ENCODE measurements at regions of chr20 and their contacts with region 1.

Region 1: GRCh38 chr20:19995220-19995863 is 21.8 kb upstream of the NAA20 start:
- DNase-seq: no peak
- H3K4me3 ChIP-seq: no peak overlapping the region
- H3K27ac ChIP-seq: peak overlapping the region; percentile 100
- H3K4me1 ChIP-seq: peaks cover 52% of the 10 kb centered on the region
- H3K27me3 ChIP-seq: no peaks in the 10 kb centered on the region
- CTCF ChIP-seq: peak; percentile 70 to 80

Region 2: DNA sequence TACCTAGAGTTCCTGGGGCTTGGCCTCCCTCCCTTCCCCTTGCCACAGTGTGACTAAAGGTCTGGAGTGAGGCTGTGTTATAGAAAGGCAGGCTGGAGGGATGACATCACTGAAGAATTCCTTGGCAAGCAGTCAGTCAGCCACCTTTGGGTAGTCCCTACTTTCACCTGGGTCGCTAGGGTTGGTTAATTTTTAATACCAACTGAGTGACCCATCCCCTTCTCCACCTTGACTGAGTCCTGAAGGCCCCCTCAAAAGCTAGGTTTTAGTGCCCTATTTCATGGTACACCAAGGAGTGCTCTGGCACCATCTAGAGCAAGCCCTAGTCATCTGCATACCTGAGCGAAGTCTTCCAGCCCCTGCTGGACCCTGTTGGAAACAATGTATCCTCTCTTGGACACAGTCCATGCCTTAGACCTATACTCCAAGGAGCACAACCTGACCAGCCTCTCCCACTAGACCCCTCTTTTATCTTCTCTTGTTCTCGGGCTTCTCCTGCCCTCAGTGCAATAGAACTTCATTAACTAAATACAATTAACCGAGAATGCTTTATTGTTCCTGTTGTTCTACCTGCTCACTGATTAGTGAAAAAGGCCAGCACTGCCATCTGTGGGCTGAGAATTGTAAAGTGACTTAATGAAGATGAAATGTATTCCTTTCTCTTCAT is 192.7 kb before region 1 on chr20:
- CTCF ChIA-PET with region 1: no interaction called
- dilution Hi-C with region 1: no loop called
- in situ Hi-C with region 1: no loop called
- intact Hi-C with region 1: loop called (anchors 5 kb)
- DNase-seq: peak; percentile 89
- H3K4me3 ChIP-seq: no peak overlapping the region
- H3K27ac ChIP-seq: peak overlapping the region; percentile 43
- H3K4me1 ChIP-seq: peaks cover 26% of the 10 kb centered on the region
- H3K27me3 ChIP-seq: no peaks in the 10 kb centered on the region
- CTCF ChIP-seq: peak; percentile 39 to 43

Region 3: GRCh38 chr20:19815553-19815991 is 179.8 kb before region 1 on chr20:
- CTCF ChIA-PET with region 1: no interaction called
- dilution Hi-C with region 1: no loop called
- in situ Hi-C with region 1: no loop called
- intact Hi-C with region 1: loop called (anchors 1 kb)
- DNase-seq: peak; percentile 97
- H3K4me3 ChIP-seq: no peak overlapping the region
- H3K27ac ChIP-seq: peak overlapping the region; percentile 92
- H3K4me1 ChIP-seq: peaks cover 46% of the 10 kb centered on the region
- H3K27me3 ChIP-seq: no peaks in the 10 kb centered on the region
- CTCF ChIP-seq: peak in 1 of 2 donors; percentile 43

Region 4: GRCh38 chr20:19913927-19914614 is 81.3 kb before region 1 on chr20:
- CTCF ChIA-PET with region 1: interaction called, 27 read pairs
- dilution Hi-C with region 1: no loop called
- in situ Hi-C with region 1: no loop called
- intact Hi-C with region 1: loop called (anchors 1 kb)
- DNase-seq: peak; percentile 97
- H3K4me3 ChIP-seq: no peak overlapping the region
- H3K27ac ChIP-seq: peak overlapping the region; percentile 94
- H3K4me1 ChIP-seq: peaks cover 35% of the 10 kb centered on the region
- H3K27me3 ChIP-seq: no peaks in the 10 kb centered on the region
- CTCF ChIP-seq: no peak

Region 5: GRCh38 chr20:19924255-19924654 is 71.1 kb before region 1 on chr20:
- CTCF ChIA-PET with region 1: no interaction called
- dilution Hi-C with region 1: no loop called
- in situ Hi-C with region 1: no loop called
- intact Hi-C with region 1: no loop called
- DNase-seq: no peak
- H3K4me3 ChIP-seq: no peak overlapping the region
- H3K27ac ChIP-seq: no peak overlapping the region
- H3K4me1 ChIP-seq: peaks cover 17% of the 10 kb centered on the region
- H3K27me3 ChIP-seq: no peaks in the 10 kb centered on the region
- CTCF ChIP-seq: no peak

Region 6: DNA sequence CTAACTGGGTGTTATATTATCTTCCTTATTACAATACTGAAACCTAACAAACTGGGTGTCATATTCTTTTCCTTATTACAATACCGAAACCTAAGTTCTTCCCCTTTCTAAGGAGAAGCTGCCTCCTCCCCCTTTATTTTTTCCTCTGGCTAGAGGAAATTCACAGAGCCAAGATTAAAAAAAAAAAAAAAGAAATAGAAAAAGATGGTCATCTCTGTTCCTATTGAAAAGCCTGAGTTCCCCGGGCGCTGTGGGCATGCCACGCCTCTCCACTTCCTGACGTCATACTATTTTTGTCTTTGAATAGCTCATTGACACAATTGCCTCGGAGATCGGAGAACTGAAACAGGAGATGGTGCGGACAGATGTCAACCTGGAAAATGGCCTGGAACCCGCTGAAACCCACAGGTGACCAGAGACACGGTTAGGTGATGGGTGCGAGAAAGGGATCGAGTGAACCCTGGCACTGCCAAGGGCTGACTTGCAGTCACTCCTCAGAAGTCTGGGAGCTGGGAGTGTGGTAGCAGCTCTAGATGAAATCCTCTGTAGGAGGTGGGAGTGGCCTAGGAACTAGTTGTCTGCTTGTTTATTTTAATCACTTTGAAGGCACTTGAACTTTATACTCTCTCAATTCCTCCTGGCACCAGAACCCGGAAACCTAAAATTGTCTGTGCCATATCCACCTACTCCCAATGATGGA is 60.4 kb before region 1 on chr20:
- CTCF ChIA-PET with region 1: no interaction called
- dilution Hi-C with region 1: no loop called
- in situ Hi-C with region 1: no loop called
- intact Hi-C with region 1: loop called (anchors 1 kb)
- DNase-seq: peak; percentile 88
- H3K4me3 ChIP-seq: peak overlapping the region; percentile 31 to 52 (median 49)
- H3K27ac ChIP-seq: peak overlapping the region; percentile 85
- H3K4me1 ChIP-seq: peaks cover 42% of the 10 kb centered on the region
- H3K27me3 ChIP-seq: no peaks in the 10 kb centered on the region
- CTCF ChIP-seq: no peak

Region 7: DNA sequence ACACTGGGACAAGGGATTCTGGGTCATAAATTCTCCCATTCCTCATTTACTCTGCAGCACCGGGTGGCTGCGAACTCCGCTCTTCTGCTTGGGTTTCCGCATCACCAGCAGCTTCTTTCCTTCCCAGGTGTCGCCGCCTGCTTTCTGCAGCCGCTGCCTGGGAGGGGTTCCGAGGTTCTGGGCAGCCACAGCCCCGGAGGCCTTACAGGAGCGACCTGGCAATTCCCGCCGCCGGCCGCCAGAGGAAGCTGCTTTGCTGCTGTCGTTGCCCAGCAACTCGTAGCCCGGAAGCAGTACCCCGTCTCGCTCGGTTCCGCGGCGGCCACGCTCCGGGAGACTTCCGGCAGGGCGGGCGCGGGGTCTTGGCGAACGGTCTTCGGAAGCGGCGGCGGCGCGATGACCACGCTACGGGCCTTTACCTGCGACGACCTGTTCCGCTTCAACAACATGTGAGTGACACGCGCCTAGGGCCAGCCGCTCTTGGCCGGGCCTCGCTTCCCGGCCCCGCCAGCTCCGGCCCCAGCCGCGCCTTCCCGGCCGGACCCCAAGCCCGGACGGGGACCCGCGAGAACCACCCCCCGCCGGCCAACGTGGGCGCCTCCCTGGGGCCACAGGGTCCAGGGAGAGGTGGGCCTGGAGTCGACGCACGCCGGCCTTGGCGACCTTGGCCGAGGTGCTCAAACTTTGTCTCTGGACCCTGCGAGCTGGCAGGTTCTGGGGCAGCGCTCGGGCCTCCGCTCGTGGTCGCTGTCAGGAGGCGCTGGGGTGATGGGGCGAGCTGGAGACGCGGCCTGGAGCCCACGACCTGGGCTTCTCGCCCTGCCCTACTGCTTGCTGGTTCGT is 21.9 kb after region 1 on chr20 and contains the start of gene NAA20:
- CTCF ChIA-PET with region 1: no interaction called
- dilution Hi-C with region 1: no loop called
- in situ Hi-C with region 1: no loop called
- intact Hi-C with region 1: loop called (anchors 1 kb)
- DNase-seq: peak; percentile 86
- H3K4me3 ChIP-seq: peak within 1 kb of the TSS; percentile 87 to 100 (median 97)
- H3K27ac ChIP-seq: peak within 1 kb of the TSS; percentile 82
- H3K4me1 ChIP-seq: peaks cover 21% of the 10 kb centered on the region
- H3K27me3 ChIP-seq: no peaks in the 10 kb centered on the region
- CTCF ChIP-seq: peak; percentile 48 to 77
- total RNA-seq, gene NAA20: 44.3 to 105 TPM